AG04449 (cell line): ENCODE measurements at regions of chr1 and their contacts with region 1.

Region 1: DNA sequence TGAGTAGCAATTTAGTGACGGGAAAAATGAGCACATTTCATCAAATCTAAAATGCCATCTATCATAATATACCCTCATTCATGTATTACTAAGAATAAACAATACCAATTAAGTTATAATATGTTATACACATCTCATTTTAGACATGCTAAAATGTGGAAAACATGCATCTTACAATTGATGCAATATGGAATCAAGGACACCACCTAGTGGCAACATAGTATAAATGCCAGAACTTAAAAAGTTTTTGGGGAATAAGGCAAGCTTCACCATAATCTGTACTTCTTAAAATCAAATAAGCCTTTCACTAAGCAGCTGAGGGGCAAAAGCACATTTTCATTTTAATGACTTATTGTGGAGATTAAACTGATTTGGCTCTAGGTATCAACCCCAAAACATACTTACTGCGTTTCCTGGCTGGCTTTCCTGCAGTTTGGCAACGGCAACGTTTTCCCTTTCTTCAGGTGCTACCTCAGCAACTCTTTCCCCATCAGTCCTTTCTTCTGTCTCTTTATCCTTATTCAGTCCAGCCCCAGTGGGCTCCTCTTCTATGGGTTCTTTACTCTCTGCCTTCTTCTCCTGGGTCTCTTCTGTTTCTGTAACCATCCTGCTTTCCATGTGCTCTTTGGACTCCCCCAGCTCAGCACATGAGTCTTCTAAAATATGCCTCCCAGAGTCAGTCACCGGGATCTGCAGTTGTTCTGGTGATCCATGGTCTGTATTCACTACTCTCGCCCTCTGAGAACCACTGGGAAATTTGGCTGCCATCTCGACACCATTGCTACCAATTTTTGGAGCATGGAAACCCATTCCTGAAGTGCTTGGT is 11.4 kb downstream of the SDE2 start:
- DNase-seq: no peak
- H3K4me3 ChIP-seq: no peak overlapping the region
- CTCF ChIP-seq: peak; percentile 39

Region 2: DNA sequence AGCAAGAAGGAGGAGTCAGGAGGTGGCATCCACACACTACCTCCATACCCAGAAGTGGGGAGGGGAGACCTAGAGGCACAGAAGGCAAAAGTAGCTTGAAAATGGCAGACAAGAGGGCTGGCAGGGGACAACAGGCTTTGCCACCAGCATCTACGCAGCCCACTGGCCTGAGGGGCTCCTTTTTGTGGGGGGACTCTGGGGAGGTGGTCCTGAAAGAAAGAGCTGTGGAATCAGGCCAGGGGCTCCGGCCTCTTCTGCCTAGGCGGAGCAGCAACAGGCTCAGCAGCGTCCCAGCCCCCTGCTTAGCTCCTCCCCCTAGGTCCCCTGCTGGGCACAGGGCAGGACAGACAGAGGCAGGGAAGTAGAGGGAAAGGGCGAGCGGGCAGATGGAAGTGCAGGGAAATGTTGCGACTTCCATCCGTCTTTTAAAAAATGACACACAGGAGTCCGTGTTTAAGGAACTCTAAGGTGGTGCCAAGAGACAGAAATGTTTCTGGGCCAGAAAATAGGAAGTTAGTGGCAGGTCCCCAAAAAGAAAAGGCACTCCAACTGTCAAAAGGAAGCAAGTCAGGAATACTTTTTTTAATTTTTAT is 36.7 kb before region 1 on chr1:
- CTCF ChIA-PET with region 1: no interaction called
- POLR2A ChIA-PET with region 1: no interaction called
- DNase-seq: no peak
- H3K4me3 ChIP-seq: no peak overlapping the region
- CTCF ChIP-seq: no peak

Region 3: GRCh38 chr1:225999227-225999911 is 11.7 kb after region 1 on chr1 and contains the start of gene SDE2:
- CTCF ChIA-PET with region 1: interaction called, 89 read pairs
- POLR2A ChIA-PET with region 1: no interaction called
- DNase-seq: peak; percentile 85
- H3K4me3 ChIP-seq: peak within 1 kb of the TSS; percentile 97
- CTCF ChIP-seq: no peak

Region 4: DNA sequence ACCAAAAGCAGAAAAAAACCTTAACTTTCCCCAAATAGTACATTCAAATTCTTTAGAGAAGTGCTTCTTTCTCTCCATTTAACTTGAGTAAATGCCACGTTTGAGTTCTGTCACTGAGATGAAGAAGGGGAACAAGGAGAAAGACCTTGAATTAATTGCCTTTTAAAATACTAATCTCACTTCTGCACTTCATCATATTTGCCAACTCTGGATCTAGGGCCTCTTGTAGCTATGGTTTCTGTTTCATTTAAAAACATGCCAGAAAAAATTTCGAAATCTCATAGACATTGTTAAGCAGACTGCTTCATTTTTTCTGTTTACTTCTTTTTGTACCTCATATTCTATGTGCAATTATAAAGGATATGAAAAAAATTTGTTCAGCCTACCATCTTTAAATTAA is 260.4 kb after region 1 on chr1:
- CTCF ChIA-PET with region 1: no interaction called
- POLR2A ChIA-PET with region 1: no interaction called
- DNase-seq: no peak
- H3K4me3 ChIP-seq: no peak overlapping the region
- CTCF ChIP-seq: no peak